Psoas muscle (tissue), 8 donors: ENCODE measurements at regions of chr17 and their contacts with region 1.

Region 1: DNA sequence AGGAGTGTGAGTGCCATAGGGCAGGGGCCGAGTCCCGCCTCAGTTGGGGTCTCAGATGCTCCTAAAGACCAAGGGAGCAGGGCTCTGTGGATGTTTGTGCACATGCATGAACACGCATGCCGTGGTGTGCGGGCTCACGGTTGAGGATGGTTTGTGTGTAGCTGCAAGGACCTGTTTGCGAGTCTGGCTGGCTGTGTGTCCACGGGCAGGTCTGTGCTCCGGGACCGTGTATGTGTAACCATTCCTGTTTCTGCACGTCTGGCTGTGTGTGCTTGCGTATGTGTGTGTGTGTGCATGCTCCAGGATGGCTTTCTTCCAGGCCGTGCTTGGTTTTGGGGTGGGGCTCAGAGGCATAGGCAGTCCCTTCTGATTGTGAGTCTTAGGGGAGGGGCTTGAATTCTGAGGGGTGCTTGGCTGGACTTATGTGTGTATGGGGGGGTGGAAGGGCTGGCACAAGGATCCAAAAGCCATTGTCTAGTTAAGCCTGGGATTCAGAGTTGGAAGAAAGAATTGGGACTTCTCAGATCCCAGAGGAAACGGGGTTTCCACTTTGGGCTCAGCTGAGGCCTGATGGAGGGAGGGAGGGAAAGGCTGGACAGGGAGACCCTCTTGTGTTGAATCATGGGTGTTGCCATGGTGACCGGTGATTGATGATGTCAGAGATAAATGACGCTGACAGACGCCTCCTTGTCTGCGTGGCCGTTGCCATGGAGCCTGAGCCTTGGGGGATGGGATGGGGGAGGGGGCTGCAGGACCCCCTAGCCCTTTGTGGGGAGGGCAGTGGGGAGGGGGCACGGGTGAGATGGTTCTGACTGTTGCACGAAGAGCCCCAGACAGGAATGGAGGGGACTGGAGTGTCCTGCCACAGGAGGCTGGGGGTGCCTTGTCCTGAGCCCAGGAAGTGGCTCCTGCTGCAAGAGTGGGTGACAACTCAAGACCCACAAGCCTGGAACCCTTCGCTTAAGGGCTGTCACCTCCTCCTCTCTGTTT is 14.3 kb downstream of the GJD3 start:
- DNase-seq: peak; percentile 22 to 44
- ATAC-seq: no peak
- H3K4me3 ChIP-seq: peak overlapping the region; percentile 11
- H3K27ac ChIP-seq: peak overlapping the region; percentile 36
- H3K4me1 ChIP-seq: peaks cover 57% of the 10 kb centered on the region
- H3K27me3 ChIP-seq: no peaks in the 10 kb centered on the region
- CTCF ChIP-seq: no peak

Region 2: DNA sequence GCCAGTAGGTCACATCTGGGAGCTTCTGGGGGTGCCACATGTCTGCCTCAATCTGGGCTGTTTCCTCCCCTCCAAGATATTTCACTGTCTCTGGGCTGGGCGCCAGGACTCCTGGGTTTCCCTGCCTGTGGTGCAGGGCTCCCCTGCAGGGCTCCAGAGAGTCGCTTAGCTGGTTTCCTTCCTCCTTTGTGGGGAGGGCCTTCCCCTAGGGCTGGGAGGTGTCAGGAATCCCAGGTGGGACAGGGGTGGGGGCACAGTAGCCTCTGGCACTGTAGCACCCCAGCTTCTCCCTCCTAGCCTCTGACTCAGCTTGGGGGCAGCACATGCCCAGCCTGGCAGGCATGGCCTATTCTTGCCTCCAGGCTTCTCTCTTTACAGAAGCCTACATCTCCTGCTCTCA is 38.6 kb before region 1 on chr17:
- intact Hi-C with region 1: loop called (anchors 2 kb)
- DNase-seq: peak; percentile 78 to 88
- ATAC-seq: peak; percentile 41 to 69 (median 50)
- H3K4me3 ChIP-seq: peak overlapping the region; percentile 19
- H3K27ac ChIP-seq: peak overlapping the region; percentile 97
- H3K4me1 ChIP-seq: peaks cover 91% of the 10 kb centered on the region
- H3K27me3 ChIP-seq: no peaks in the 10 kb centered on the region
- CTCF ChIP-seq: no peak

Region 3: DNA sequence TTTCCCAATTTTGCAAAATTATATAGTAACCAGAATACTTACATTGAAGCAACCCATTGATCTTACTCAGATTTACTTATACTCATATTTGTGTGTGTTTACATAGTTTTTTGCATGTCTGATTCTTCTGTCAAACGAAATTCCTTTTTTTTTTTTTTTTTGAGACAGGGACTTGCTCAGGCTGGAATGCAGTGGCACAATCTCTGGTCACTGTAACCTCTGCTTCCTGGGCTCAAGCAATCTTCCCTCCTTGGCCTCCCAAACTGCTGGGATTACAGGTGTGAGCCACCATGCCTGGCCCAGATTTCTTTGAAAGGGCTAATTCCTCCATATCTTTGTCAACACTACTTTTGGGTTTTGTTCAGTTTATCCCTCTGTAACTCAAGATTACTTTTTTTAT is 37.5 kb after region 1 on chr17:
- intact Hi-C with region 1: no loop called
- DNase-seq: no peak
- ATAC-seq: no peak
- H3K4me3 ChIP-seq: no peak overlapping the region
- H3K27ac ChIP-seq: no peak overlapping the region
- H3K4me1 ChIP-seq: no peaks in the 10 kb centered on the region
- H3K27me3 ChIP-seq: no peaks in the 10 kb centered on the region
- CTCF ChIP-seq: no peak

Region 4: DNA sequence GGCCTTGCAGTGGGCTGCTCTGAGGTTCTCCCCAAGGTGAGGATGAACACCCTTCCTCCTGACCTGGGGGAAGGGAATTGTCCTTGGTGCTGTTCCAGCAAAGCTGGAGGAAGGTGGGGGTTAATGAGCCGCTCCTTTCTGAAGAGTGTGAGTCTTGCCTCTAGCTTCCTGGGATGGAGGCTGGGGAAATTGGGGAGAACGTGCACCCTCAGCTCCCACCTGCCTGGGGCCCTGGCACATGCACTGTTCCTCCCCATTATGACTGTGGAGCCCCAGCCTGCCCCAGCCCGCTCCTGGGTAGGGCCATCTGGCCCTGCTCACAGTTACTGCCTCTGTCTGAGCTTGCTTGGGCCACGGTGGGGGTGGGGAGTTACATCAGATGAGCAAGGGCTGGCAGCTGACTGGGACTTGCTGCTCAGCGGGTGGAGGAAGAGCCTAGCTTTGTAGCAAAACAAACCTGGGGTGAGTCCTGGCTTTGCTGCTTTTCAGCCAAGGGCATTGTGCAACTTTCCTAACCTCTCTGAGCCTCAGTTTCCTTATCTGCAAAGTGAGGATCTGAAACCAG is 140.2 kb after region 1 on chr17:
- intact Hi-C with region 1: no loop called
- DNase-seq: peak; percentile 65 to 68
- ATAC-seq: peak in 2 of 4 donors; percentile 22 to 24
- H3K4me3 ChIP-seq: no peak overlapping the region
- H3K27ac ChIP-seq: no peak overlapping the region
- H3K4me1 ChIP-seq: no peaks in the 10 kb centered on the region
- H3K27me3 ChIP-seq: no peaks in the 10 kb centered on the region
- CTCF ChIP-seq: no peak

Region 5: GRCh38 chr17:40559954-40560591 is 209.9 kb after region 1 on chr17:
- intact Hi-C with region 1: no loop called
- DNase-seq: peak; percentile 88 to 91
- ATAC-seq: peak; percentile 88 to 96 (median 92)
- H3K4me3 ChIP-seq: no peak overlapping the region
- H3K27ac ChIP-seq: peak overlapping the region; percentile 30
- H3K4me1 ChIP-seq: peaks cover 5% of the 10 kb centered on the region
- H3K27me3 ChIP-seq: peaks cover 0 to 15% (median 0%) of the 10 kb centered on the region in 3 donors
- CTCF ChIP-seq: peak; percentile 96